Transverse colon (tissue), 4 donors: ENCODE measurements at regions of chr1 and their contacts with region 1.

Region 1: GRCh38 chr1:108199781-108200570 is at the start of gene SLC25A24:
- DNase-seq: peak; percentile 90
- H3K4me3 ChIP-seq: peak within 1 kb of the TSS; percentile 90 to 95 (median 92)
- H3K27ac ChIP-seq: peak within 1 kb of the TSS; percentile 97 to 98 (median 98)
- H3K4me1 ChIP-seq: peaks cover 0 to 33% (median 21%) of the 10 kb centered on the region in 4 donors
- H3K27me3 ChIP-seq: no peaks in the 10 kb centered on the region
- CTCF ChIP-seq: no peak
- EP300 ChIP-seq: no peak
- POLR2A ChIP-seq: peak; percentile 68
- total RNA-seq, gene SLC25A24: 56.5 to 83.0 (median 77.3) TPM

Region 2: DNA sequence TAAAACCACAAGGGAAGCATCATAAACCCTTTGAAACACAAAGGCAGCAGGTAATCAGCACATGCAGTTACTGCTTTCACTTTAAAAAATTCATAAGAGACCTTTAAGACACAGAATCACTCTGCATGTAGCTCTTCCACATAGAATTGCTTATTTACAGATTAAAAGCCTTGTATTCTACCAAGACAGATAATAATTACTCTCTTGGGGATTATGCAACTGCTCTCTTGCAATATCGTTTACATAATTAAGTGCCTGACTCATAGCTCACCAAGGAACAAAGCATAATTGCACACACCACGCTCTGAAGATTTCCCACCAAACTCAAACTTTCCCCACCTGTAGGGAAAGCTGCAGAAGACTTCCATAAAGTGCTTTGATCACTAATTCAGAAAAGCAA is 322.9 kb before region 1 on chr1:
- in situ Hi-C with region 1: no loop called
- intact Hi-C with region 1: no loop called
- DNase-seq: no peak
- H3K4me3 ChIP-seq: no peak overlapping the region
- H3K27ac ChIP-seq: no peak overlapping the region
- H3K4me1 ChIP-seq: peaks cover 0 to 5% (median 0%) of the 10 kb centered on the region in 4 donors
- H3K27me3 ChIP-seq: no peaks in the 10 kb centered on the region
- CTCF ChIP-seq: no peak
- EP300 ChIP-seq: no peak
- POLR2A ChIP-seq: no peak

Region 3: GRCh38 chr1:107976836-107977235 is 223.1 kb before region 1 on chr1:
- in situ Hi-C with region 1: no loop called
- intact Hi-C with region 1: no loop called
- DNase-seq: no peak
- H3K4me3 ChIP-seq: no peak overlapping the region
- H3K27ac ChIP-seq: no peak overlapping the region
- H3K4me1 ChIP-seq: no peaks in the 10 kb centered on the region
- H3K27me3 ChIP-seq: no peaks in the 10 kb centered on the region
- CTCF ChIP-seq: no peak
- EP300 ChIP-seq: no peak
- POLR2A ChIP-seq: no peak

Region 4: GRCh38 chr1:108559215-108560186 is 359.5 kb after region 1 on chr1 and contains the start of gene EEIG2:
- in situ Hi-C with region 1: loop called in 1 of 4 experiments (anchors 25 kb)
- intact Hi-C with region 1: no loop called
- DNase-seq: peak; percentile 94
- H3K4me3 ChIP-seq: peak within 1 kb of the TSS; percentile 68 to 82 (median 73)
- H3K27ac ChIP-seq: peak within 1 kb of the TSS; percentile 89 to 90 (median 89)
- H3K4me1 ChIP-seq: peaks cover 11 to 46% (median 24%) of the 10 kb centered on the region in 4 donors
- H3K27me3 ChIP-seq: no peaks in the 10 kb centered on the region
- CTCF ChIP-seq: peak; percentile 39 to 87 (median 75)
- EP300 ChIP-seq: peak; percentile 34
- POLR2A ChIP-seq: no peak
- total RNA-seq, gene EEIG2: 15.7 to 27.0 (median 24.9) TPM

Region 5: DNA sequence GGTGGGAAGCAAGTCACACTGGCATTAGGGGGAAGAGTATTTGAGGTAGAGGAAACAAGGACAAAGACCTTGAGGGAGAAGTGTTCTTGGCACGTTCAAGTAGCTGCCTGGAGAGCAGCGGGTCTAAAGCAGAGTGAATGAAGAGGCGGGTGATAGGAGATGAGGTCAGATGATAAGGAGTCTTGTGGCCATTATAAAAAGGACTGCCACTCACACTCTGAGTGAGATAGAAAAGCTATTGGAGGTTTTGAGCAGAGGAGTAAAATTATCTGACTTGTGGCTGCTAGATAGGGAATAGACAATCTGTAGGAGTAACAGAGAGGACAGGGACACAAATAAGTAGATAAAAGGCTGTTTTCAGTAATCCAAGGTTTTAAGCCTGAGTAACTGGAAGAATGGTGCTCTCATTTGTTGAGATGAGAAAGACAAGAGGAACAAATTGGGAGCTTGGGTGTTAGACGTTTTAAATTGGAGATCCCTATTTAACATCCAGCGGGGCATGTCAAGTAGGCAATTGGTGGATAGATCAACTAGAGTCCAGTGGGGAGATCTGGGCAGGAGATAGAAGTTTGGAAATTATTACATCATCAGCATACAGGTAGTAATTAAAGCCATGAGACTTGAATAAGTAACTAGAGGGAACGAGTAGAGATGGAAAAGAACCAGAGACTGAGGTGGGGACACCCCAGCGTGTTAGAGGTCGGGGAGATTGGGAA is 417.2 kb after region 1 on chr1:
- in situ Hi-C with region 1: no loop called
- intact Hi-C with region 1: no loop called
- DNase-seq: no peak
- H3K4me3 ChIP-seq: no peak overlapping the region
- H3K27ac ChIP-seq: no peak overlapping the region
- H3K4me1 ChIP-seq: no peaks in the 10 kb centered on the region
- H3K27me3 ChIP-seq: no peaks in the 10 kb centered on the region
- CTCF ChIP-seq: no peak
- EP300 ChIP-seq: no peak
- POLR2A ChIP-seq: no peak

Region 6: DNA sequence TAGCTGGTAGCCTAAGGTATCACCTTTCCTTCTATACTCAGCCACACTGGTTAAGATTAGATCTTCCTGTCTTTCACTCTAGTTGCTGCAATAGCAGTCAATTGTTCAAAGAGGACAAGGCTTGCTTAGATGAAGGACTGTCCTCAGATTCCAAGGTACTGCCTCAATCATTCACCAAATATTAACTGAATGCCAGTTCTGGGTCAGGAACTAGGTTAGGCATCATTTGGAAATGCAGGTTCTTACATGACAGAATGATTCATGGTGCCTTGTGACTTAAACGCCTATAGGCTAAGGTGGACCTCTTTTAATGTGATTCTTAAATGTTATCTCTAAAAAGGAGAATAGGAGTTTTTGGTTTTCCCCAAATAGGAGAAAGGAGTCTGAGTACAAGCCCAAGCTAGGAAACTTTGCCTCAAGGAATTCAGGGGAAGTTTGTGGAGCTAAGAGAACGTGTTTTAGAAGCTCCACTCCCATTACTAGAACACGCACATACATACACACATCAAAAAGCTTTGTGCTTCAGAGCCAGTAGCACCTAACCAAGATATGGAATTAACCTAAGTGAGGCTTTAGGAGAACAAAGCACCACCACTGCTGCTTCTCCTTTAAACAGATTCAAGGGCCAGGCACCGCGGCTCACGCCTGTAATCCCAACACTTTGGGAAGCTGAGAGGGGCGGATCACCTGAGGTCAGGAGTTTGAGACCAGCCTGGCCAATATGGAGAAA is 850.5 kb after region 1 on chr1:
- in situ Hi-C with region 1: loop called in 1 of 4 experiments (anchors 25 kb)
- intact Hi-C with region 1: no loop called
- DNase-seq: no peak
- H3K4me3 ChIP-seq: no peak overlapping the region
- H3K27ac ChIP-seq: no peak overlapping the region
- H3K4me1 ChIP-seq: no peaks in the 10 kb centered on the region
- H3K27me3 ChIP-seq: no peaks in the 10 kb centered on the region
- CTCF ChIP-seq: no peak
- EP300 ChIP-seq: no peak
- POLR2A ChIP-seq: no peak